Left ventricle myocardium inferior (tissue), 1 donor: ENCODE measurements at regions of chr1 and their contacts with region 1.

Region 1: DNA sequence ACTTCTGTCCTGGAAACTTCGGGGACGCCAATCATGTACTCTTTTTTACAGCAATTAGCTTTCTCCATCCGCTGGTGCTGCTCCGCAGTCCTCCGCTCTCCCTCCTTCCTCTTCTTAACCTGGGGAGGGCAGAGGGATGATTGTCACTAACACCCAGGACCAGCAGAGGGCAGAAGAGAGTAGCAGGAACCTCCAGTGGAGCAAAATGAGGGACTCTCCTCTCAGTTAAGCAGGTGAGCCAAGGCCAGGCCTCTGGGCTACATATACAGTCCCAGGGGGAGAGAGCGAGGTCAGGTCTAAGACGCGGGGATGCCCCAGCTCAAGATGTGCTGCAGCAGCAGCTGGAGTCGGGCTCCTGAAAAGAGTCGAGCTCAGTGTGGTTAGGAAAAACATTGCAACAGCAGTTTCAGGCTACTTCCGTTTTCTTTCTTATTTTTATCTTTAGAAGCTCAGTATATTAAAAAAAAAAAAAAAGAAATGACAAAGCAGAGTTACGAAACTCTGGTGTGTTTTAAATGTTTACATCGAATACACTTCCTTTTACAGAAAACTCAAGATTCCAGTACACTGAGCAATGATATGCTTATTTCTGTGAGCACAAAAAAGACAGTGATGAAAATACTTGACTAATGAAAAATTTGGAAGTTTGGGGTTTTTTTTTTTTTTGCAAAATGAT is 25.7 kb upstream of the NLRP3 start:
- DNase-seq: peak; percentile 63
- H3K4me3 ChIP-seq: peak overlapping the region; percentile 27
- H3K27ac ChIP-seq: peak overlapping the region; percentile 29
- H3K4me1 ChIP-seq: no peaks in the 10 kb centered on the region
- H3K27me3 ChIP-seq: peaks cover 5% of the 10 kb centered on the region
- CTCF ChIP-seq: peak; percentile 91

Region 2: DNA sequence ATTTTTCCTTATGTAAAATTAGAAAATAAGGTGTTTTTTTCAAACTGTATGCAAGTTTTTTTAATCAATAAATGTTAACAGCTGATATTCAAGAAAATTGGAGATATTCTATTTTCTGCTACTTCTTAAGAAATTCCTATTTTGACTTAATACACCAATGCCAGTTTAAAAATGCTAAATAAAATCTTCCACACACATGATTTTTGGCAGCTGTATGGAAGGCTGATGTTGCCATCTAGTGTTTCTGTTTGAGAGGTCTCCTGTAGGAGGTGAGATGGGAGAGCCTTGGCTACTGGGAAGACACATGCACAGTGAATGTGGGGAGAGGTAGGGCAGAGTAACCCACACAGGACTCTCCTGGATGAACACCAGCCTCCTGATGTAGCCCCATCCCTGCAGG is 96.8 kb after region 1 on chr1:
- intact Hi-C with region 1: loop called (anchors 10 kb)
- DNase-seq: no peak
- H3K4me3 ChIP-seq: no peak overlapping the region
- H3K27ac ChIP-seq: no peak overlapping the region
- H3K4me1 ChIP-seq: no peaks in the 10 kb centered on the region
- H3K27me3 ChIP-seq: peaks cover 38% of the 10 kb centered on the region
- CTCF ChIP-seq: peak; percentile 56